Activated T-helper 2 cell treated with anti-CD3 and anti-CD28 coated beads, Interferon-gamma antibody, Interleukin-2, Interleukin-4, amounts not matched to agents 10 μg/mL and 5 μg/mL and 100 μg/mL, durations not matched to agents 14 hours and 24 hours and 36 hours (primary cell): ENCODE measurements at regions of chr2 and their contacts with region 1.

Region 1: GRCh38 chr2:196160101-196160500 is 11.3 kb downstream of the STK17B start:
- DNase-seq: peak; percentile 69
- H3K4me3 Mint-ChIP-seq: peak overlapping the region; percentile 55
- H3K27ac Mint-ChIP-seq: peak overlapping the region; percentile 87
- H3K4me1 Mint-ChIP-seq: peaks cover 60% of the 10 kb centered on the region
- H3K27me3 Mint-ChIP-seq: no peaks in the 10 kb centered on the region

Region 2: DNA sequence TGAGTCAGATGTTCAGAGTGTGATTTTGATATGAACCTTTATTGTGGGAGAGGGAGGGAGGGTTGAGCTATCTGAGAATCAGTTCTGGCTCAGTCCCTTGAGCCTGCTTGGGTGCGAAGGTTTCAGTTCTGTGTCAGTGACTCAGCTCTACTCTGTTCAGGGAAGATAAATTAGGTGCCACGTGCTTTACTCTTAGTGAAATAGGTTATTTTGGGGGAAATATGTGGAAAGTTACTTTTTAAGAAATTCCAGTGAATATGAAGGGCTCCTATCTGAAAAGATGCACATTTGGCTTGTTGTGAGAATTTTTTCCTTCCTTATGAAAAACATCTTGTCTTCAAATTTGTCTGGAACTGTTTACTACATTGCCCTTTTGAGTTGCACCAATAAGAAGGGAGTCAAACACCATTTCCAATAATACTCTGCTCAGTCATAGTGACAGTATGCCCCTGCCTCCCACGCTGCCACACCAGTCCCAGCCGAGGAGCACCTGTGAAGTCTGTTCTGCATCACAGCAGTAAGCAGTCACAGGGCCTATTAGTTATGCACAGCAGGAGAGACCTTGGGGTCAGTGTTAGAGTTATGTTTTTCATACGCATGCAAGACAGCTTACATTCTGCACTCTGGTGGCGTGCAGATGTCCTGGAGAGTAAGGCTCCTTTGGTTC is 58.6 kb before region 1 on chr2:
- intact Hi-C with region 1: no loop called
- DNase-seq: no peak
- H3K4me3 Mint-ChIP-seq: no peak overlapping the region
- H3K27ac Mint-ChIP-seq: no peak overlapping the region
- H3K4me1 Mint-ChIP-seq: peaks cover 23% of the 10 kb centered on the region
- H3K27me3 Mint-ChIP-seq: peaks cover 5% of the 10 kb centered on the region

Region 3: DNA sequence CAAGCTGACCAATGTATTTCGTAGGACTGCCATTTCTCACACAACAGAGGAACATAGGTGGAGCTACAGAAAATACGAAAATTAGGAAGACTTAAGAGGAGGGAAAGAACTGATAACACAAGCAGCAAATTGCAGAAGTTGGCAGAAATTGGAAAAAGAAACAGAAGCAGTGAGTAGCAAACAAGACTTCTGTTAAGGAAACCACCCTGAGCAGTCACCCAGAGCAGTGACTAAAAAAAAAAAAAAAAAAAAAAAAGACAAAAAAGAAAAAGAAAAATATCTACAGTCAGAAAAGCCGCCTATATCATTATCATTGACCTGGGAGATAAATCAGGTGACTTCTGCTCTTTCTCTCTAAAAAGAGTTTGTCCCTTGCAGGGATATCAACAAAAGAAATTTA is 10.2 kb before region 1 on chr2:
- intact Hi-C with region 1: loop called (anchors 1 kb)
- DNase-seq: no peak
- H3K4me3 Mint-ChIP-seq: peak overlapping the region; percentile 24
- H3K27ac Mint-ChIP-seq: peak overlapping the region; percentile 70
- H3K4me1 Mint-ChIP-seq: peaks cover 76% of the 10 kb centered on the region
- H3K27me3 Mint-ChIP-seq: no peaks in the 10 kb centered on the region

Region 4: GRCh38 chr2:196200557-196200956 is 40.5 kb after region 1 on chr2:
- intact Hi-C with region 1: loop called (anchors 1 kb)
- DNase-seq: peak; percentile 34
- H3K4me3 Mint-ChIP-seq: peak overlapping the region; percentile 26
- H3K27ac Mint-ChIP-seq: peak overlapping the region; percentile 75
- H3K4me1 Mint-ChIP-seq: peaks cover 44% of the 10 kb centered on the region
- H3K27me3 Mint-ChIP-seq: no peaks in the 10 kb centered on the region

Region 5: DNA sequence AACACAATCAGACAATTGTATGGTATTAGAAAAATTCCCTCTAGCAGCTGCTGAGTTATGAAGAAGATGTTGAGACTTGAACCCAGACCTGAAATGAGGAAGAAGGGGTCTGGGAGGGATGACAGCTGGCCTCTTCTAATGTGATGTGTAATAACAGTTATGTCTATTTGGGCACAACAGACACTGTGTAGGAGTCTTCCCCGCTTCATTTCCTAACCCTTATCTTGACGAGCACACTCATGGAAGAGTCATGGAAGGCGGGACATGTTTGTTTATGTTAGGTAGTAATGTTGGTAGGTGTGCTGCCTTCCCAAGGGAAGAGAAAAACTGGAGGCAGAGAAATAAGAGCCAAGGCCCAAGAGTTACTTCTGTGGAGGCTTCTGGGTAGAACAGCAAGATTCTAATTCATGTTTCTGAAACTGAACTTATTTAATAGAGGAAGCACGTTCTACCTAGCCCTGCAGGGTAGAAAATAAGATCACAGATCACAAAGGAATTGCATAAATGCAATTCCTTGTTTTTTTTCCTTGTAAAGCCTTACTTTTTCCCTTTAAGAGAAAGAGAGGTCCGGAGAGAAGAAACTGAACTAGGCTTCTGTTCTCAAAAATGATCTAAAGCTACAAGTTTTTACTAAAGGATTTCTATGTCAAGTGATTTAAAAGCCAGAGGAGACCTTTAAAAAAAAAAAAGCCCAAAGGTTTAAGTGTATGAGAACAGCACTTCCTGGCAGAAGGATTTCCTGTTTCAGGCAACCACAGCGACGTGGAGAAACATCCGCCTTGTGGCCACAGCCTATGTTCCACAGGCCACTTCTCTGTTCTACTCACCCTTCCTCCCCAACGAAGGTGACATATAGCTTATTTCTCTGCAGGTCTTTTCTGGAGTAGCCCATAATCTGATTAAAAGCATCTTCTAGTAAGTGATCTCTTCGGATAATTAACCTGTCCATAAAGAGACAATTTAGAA is 79.8 kb after region 1 on chr2:
- intact Hi-C with region 1: loop called (anchors 1 kb)
- DNase-seq: peak; percentile 85
- H3K4me3 Mint-ChIP-seq: peak overlapping the region; percentile 62
- H3K27ac Mint-ChIP-seq: peak overlapping the region; percentile 97
- H3K4me1 Mint-ChIP-seq: peaks cover 66% of the 10 kb centered on the region
- H3K27me3 Mint-ChIP-seq: no peaks in the 10 kb centered on the region